Activated CD4-positive, alpha-beta T cell treated with anti-CD3 and anti-CD28 coated beads, Interleukin-2, amount 10 ng/mL, durations not matched to agents 24 days and 14 days (primary cell): ENCODE measurements at regions of chr2 and their contacts with region 1.

Region 1: DNA sequence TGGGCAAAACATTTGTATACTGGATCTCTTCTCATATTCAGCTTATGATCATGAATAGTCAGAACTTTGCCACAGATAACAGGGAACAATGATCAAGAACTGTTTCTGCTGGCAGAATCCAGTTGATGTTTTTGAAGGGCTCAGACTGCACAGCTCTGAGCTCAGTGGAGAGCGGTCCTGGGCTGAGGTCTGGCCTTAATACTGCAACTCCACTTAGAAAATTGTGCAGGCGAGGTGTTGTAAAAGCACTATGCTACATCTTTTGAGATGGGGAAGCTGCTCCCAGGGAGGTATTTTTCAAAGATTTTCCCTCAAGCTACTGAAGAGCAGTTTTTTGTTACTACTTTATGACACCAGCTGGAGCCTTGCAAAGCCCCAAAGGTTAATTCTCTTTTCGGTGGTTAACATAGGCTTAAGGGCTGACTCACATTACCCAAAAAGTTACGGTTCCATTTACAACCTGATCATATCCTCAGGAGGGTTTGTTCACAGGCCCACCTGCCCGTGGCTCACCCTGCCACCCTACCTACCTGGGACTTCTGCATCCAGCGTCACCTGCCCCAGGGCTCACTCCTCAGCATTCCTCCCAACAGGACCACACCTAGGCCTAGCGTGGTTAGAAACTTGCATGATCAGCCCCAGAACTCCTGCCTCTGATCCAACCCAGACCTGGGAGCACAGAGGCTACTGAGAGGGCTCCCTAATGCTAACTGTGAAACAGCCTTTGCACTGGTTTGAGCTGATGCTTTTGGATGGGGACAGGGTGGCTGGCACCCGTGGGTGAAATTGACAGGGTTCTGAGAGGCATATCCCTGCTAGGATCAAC is 114.4 kb downstream of the NCK2 start:
- DNase-seq: peak; percentile 67
- H3K4me3 Mint-ChIP-seq: peak overlapping the region; percentile 74
- H3K27ac Mint-ChIP-seq: peak overlapping the region; percentile 92
- H3K4me1 Mint-ChIP-seq: peaks cover 77% of the 10 kb centered on the region
- H3K27me3 Mint-ChIP-seq: no peaks in the 10 kb centered on the region

Region 2: GRCh38 chr2:105287692-105288091 is 571.4 kb before region 1 on chr2:
- intact Hi-C with region 1: no loop called
- DNase-seq: peak; percentile 76
- H3K4me3 Mint-ChIP-seq: no peak overlapping the region
- H3K27ac Mint-ChIP-seq: no peak overlapping the region
- H3K4me1 Mint-ChIP-seq: peaks cover 4% of the 10 kb centered on the region
- H3K27me3 Mint-ChIP-seq: no peaks in the 10 kb centered on the region

Region 3: GRCh38 chr2:105652014-105652796 is 206.9 kb before region 1 on chr2:
- intact Hi-C with region 1: loop called (anchors 5 kb)
- DNase-seq: peak; percentile 32
- H3K4me3 Mint-ChIP-seq: no peak overlapping the region
- H3K27ac Mint-ChIP-seq: no peak overlapping the region
- H3K4me1 Mint-ChIP-seq: peaks cover 3% of the 10 kb centered on the region
- H3K27me3 Mint-ChIP-seq: peaks cover 2% of the 10 kb centered on the region

Region 4: DNA sequence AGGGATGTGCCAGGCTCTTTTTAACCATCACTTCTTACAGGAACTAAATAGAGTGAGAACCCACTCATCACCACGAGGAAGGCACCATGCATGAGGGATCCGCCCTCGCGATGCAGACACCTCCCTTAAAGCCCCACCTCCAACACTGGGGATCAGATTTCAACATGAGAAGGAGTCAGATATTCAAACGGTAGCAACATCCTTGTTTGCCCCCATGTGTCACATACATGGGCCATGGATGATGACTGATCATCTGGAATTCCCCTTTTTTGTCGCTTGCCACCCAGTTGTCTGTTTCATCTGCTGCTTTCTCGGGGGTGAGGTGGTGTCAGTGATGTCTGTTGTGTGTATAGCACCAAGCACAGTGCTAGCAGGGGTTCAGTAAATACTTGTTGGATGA is 56.5 kb before region 1 on chr2:
- intact Hi-C with region 1: loop called (anchors 1 kb)
- DNase-seq: peak; percentile 90
- H3K4me3 Mint-ChIP-seq: peak overlapping the region; percentile 68
- H3K27ac Mint-ChIP-seq: peak overlapping the region; percentile 93
- H3K4me1 Mint-ChIP-seq: peaks cover 81% of the 10 kb centered on the region
- H3K27me3 Mint-ChIP-seq: no peaks in the 10 kb centered on the region

Region 5: DNA sequence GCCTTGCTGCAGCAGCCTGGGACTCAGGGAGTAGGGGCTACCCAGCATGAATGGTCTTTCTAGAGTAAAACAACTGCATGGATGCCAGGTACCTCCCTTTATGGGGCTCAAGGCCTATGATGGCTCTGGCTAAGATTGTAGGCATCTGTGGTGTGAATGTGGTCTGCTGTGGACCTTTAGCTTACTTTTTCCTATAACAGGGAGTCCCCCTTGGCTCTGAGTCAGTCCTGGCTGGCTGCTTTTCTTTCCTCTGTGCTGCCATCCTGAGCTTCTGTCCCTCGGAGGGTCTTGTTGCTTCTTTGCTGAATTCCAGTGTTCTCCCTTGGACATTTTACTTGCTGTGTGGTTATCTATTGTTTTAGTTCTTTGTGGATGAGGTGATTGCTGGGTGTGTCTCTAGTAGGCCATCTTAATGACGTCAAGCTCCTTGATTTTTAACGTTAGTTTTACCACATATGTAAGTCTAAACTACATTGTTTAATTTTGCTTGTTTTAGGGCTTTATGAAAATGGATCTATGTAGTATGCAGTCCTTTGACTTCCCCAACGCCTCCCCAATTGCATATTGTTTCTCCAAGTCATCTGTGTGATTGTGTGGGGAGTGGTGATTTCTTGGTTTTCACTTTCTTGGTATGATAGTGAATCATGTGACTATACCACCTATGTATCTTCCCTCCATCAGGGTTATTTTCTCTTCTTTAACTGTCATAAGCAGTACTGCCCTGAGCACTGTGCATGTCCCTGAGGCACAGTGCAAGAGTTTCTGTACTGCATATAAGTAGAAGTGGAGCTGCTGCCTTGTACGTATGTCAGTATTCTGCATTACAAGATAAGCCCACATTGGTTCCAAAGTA is 22.0 kb before region 1 on chr2:
- intact Hi-C with region 1: loop called (anchors 1 kb)
- DNase-seq: no peak
- H3K4me3 Mint-ChIP-seq: peak overlapping the region; percentile 52
- H3K27ac Mint-ChIP-seq: peak overlapping the region; percentile 77
- H3K4me1 Mint-ChIP-seq: peaks cover 73% of the 10 kb centered on the region
- H3K27me3 Mint-ChIP-seq: no peaks in the 10 kb centered on the region

Region 6: DNA sequence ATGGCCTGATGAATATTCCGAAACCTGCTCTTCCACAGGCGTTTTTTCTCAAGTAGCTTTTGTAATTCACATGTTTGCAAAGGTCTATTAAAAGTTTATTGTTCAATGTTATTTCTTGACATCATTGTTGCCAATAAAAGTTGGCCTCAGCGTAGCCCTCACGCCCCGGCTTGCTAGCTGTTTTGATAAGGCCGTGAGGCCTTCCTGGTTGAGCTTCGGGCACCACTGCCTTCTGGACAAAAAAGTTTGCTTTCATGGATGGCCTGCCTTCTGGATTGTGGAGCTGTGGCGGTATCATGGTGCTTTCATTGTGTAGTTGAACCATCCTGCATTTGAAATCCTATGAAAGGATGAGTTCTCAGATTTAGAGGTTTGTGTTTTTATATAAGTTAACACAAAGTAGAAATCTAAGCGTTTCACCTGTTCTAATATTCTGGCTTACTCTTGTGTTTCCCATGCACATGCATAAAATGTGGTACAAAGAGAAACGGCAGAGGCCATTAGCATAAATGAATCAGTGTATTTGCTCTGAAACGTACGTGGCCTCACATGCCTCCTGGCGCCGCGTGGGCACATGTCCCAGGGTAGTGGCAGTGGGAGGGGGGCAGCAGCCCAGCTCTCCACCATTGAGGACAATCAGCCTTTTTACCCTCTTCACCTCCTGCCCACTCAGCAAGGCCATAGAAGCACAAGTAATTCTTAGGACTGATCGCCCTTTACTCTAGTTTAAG is 20.2 kb after region 1 on chr2:
- intact Hi-C with region 1: no loop called
- DNase-seq: no peak
- H3K4me3 Mint-ChIP-seq: no peak overlapping the region
- H3K27ac Mint-ChIP-seq: peak overlapping the region; percentile 68
- H3K4me1 Mint-ChIP-seq: peaks cover 62% of the 10 kb centered on the region
- H3K27me3 Mint-ChIP-seq: no peaks in the 10 kb centered on the region

Region 7: DNA sequence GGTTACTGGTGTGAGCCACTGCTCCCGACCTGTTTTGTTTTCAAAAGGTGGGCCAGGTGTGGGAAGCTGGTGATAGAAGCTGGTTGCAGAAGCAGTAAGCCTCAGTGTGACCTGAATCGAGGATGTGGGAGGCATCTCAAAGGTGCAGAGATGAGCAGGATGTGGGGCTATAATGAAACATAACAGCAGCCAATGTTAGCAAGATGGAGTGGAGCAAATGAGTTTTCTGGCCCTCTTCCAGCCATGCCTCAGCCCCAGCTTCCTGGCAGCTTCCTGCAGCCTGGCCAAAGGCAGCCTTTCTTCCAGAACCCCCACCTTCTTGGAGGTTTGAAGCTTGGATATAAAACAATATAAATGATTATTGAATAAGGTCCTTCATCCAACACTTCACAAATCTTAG is 70.4 kb after region 1 on chr2:
- intact Hi-C with region 1: loop called (anchors 2 kb)
- DNase-seq: peak; percentile 79
- H3K4me3 Mint-ChIP-seq: peak overlapping the region; percentile 44
- H3K27ac Mint-ChIP-seq: peak overlapping the region; percentile 66
- H3K4me1 Mint-ChIP-seq: peaks cover 42% of the 10 kb centered on the region
- H3K27me3 Mint-ChIP-seq: no peaks in the 10 kb centered on the region

Region 8: GRCh38 chr2:105969555-105969954 is 110.5 kb after region 1 on chr2:
- intact Hi-C with region 1: no loop called
- DNase-seq: peak; percentile 62
- H3K4me3 Mint-ChIP-seq: no peak overlapping the region
- H3K27ac Mint-ChIP-seq: no peak overlapping the region
- H3K4me1 Mint-ChIP-seq: peaks cover 3% of the 10 kb centered on the region
- H3K27me3 Mint-ChIP-seq: no peaks in the 10 kb centered on the region